ENCODE measurements at regions of chr15 and their contacts with region 1.

Region 1: GRCh38 chr15:85044251-85044853 is 62.7 kb downstream of the PDE8A start:
- DNase-seq: peak; percentile 76
- H3K4me3 Mint-ChIP-seq: no peak overlapping the region
- H3K27ac Mint-ChIP-seq: no peak overlapping the region
- H3K4me1 Mint-ChIP-seq: peaks cover 33% of the 10 kb centered on the region
- H3K27me3 Mint-ChIP-seq: no peaks in the 10 kb centered on the region
- CTCF ChIP-seq: peak; percentile 33

Region 2: GRCh38 chr15:84588053-84588874 is 456.1 kb before region 1 on chr15:
- CTCF ChIA-PET with region 1: no interaction called
- intact Hi-C with region 1: loop called (anchors 5 kb)
- DNase-seq: peak; percentile 95
- H3K4me3 Mint-ChIP-seq: peak overlapping the region; percentile 32
- H3K27ac Mint-ChIP-seq: no peak overlapping the region
- H3K4me1 Mint-ChIP-seq: peaks cover 9% of the 10 kb centered on the region
- H3K27me3 Mint-ChIP-seq: no peaks in the 10 kb centered on the region
- CTCF ChIP-seq: peak; percentile 96

Region 3: DNA sequence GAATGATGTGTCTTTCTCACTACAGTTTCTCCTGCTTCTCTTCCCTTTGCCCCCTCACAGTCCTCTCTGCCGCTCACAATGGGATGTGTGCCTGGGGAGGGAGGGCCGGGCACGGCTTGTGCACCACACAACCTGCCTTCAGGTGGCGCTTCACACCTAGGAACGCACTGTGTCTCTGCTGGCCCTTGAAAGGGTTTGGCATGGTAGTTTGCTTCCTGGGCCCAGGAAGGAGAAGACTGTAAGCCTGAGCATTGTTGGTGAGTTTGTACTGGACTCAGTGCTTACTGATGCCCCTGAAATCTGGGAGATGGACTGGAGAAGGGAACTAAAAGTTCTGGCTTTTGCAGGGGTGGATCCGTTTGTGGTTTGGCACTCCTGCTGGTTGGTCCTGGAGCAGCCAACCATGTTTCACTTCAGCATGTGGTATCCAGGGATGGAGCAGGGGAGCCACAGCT is 218.0 kb before region 1 on chr15:
- CTCF ChIA-PET with region 1: no interaction called
- intact Hi-C with region 1: loop called (anchors 10 kb)
- DNase-seq: peak; percentile 73
- H3K4me3 Mint-ChIP-seq: no peak overlapping the region
- H3K27ac Mint-ChIP-seq: no peak overlapping the region
- H3K4me1 Mint-ChIP-seq: peaks cover 24% of the 10 kb centered on the region
- H3K27me3 Mint-ChIP-seq: no peaks in the 10 kb centered on the region
- CTCF ChIP-seq: peak; percentile 72

Region 4: GRCh38 chr15:84852212-84852611 is 192.1 kb before region 1 on chr15:
- CTCF ChIA-PET with region 1: no interaction called
- intact Hi-C with region 1: loop called (anchors 5 kb)
- DNase-seq: peak; percentile 27
- H3K4me3 Mint-ChIP-seq: peak overlapping the region; percentile 25
- H3K27ac Mint-ChIP-seq: peak overlapping the region; percentile 83
- H3K4me1 Mint-ChIP-seq: peaks cover 51% of the 10 kb centered on the region
- H3K27me3 Mint-ChIP-seq: no peaks in the 10 kb centered on the region
- CTCF ChIP-seq: no peak

Region 5: DNA sequence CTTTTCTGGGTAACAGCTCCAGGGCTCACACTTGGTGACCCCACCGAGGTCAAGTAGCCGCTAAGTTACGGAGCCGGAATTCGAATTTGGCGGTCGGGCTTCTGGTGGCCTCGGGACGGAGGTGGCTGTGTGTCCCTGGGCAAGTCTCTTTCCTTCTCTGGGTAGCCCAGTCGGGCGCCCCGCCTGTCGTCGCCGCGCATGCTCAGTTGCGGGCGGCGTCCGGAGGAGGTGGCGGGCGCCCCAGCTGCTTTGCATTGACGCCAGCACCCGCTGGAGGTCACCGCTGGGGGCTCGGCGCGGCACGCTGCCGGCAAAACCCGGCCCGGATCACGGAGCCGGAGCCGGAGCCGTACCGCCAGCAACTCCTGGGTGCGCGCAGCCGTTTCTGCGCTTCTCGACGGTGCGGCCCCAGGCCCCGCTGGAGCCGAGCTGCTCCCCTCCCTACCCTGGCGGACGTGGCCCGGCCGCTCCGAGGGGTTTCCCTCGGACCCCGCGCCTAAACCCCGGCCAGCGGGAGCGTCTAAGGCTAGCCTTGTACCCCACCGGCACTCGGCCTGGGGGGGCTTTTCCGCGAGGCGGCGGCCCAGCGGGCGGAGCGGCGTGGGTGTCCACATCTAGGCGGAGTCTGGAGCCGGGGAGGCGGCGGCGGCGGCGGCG is 63.2 kb before region 1 on chr15:
- CTCF ChIA-PET with region 1: interaction called, 10 read pairs
- intact Hi-C with region 1: loop called (anchors 1 kb)
- DNase-seq: peak; percentile 99
- H3K4me3 Mint-ChIP-seq: peak overlapping the region; percentile 97
- H3K27ac Mint-ChIP-seq: peak overlapping the region; percentile 94
- H3K4me1 Mint-ChIP-seq: peaks cover 28% of the 10 kb centered on the region
- H3K27me3 Mint-ChIP-seq: no peaks in the 10 kb centered on the region
- CTCF ChIP-seq: peak; percentile 49

Region 6: GRCh38 chr15:85003593-85004312 is 40.6 kb before region 1 on chr15:
- CTCF ChIA-PET with region 1: no interaction called
- intact Hi-C with region 1: no loop called
- DNase-seq: no peak
- H3K4me3 Mint-ChIP-seq: no peak overlapping the region
- H3K27ac Mint-ChIP-seq: no peak overlapping the region
- H3K4me1 Mint-ChIP-seq: peaks cover 51% of the 10 kb centered on the region
- H3K27me3 Mint-ChIP-seq: no peaks in the 10 kb centered on the region
- CTCF ChIP-seq: no peak

Measured in Calu3 (cell line).